Mammary epithelial cell (primary cell): ENCODE measurements at regions of chr9 and their contacts with region 1.

Region 1: DNA sequence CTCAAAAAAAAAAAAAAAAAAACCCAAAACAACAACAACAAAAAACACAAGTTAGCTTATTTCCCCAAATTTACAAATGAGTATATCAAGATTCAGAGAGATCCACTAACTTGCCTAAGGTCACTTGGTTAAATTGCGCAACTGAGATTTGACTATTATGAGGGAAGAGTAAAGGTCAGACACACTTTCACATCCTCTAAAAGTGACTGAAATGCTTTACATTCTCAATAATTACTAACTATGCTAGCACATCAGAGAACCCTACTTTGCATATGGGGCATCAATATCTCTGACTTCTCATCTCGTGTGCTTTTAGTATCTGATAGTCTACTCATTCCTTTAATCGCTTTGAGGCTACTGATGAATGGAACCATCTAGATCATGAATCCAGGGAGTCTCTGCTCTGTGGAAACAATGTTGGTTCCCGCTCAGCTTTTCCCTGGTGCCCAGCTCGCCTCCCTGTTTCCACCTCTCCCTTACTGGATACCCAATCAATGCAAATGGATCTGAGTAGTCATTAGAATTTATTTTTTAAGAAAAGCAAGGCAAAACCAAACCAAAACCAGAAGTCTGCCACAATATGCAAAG is 182.1 kb upstream of the TRIM32 start:
- DNase-seq: no peak
- H3K4me3 ChIP-seq: no peak overlapping the region
- H3K27ac ChIP-seq: no peak overlapping the region
- H3K4me1 ChIP-seq: peaks cover 5% of the 10 kb centered on the region
- H3K27me3 ChIP-seq: no peaks in the 10 kb centered on the region
- CTCF ChIP-seq: no peak

Region 2: GRCh38 chr9:116491219-116491618 is 13.8 kb before region 1 on chr9:
- CTCF ChIA-PET with region 1: no interaction called
- dilution Hi-C with region 1: no loop called
- in situ Hi-C with region 1: no loop called
- intact Hi-C with region 1: no loop called
- DNase-seq: no peak
- H3K4me3 ChIP-seq: no peak overlapping the region
- H3K27ac ChIP-seq: no peak overlapping the region
- H3K4me1 ChIP-seq: no peaks in the 10 kb centered on the region
- H3K27me3 ChIP-seq: peaks cover under 1% of the 10 kb centered on the region
- CTCF ChIP-seq: no peak

Region 3: GRCh38 chr9:116549061-116549664 is 44.2 kb after region 1 on chr9:
- CTCF ChIA-PET with region 1: no interaction called
- dilution Hi-C with region 1: no loop called
- in situ Hi-C with region 1: no loop called
- intact Hi-C with region 1: loop called (anchors 5 kb)
- DNase-seq: peak; percentile 95
- H3K4me3 ChIP-seq: no peak overlapping the region
- H3K27ac ChIP-seq: no peak overlapping the region
- H3K4me1 ChIP-seq: peaks cover 23% of the 10 kb centered on the region
- H3K27me3 ChIP-seq: no peaks in the 10 kb centered on the region
- CTCF ChIP-seq: no peak

Region 4: DNA sequence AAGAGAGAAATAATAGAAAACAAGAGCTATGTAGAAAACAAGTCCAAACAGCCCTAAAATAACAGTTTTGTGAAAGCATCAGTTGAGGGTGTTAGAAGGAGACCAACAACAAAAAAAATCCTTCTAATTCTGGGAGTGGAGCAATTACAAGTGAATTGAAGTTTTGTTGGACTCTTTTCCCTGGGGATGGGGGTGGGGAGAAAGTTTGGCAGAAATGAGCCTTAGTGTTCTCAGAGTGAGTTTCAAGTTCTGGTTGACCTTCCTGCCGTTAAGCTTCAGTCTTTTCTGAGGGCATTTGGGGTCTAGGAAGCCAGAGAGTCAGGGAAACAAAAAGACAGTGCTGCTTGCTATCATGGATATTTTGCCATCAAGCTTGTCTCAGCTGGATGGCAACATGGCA is 75.9 kb after region 1 on chr9:
- CTCF ChIA-PET with region 1: no interaction called
- dilution Hi-C with region 1: loop called (anchors 5 kb)
- in situ Hi-C with region 1: no loop called
- intact Hi-C with region 1: no loop called
- DNase-seq: no peak
- H3K4me3 ChIP-seq: no peak overlapping the region
- H3K27ac ChIP-seq: no peak overlapping the region
- H3K4me1 ChIP-seq: no peaks in the 10 kb centered on the region
- H3K27me3 ChIP-seq: no peaks in the 10 kb centered on the region
- CTCF ChIP-seq: no peak